ENCODE measurements at regions of chr6 and their contacts with region 1.

Region 1: GRCh38 chr6:53484476-53485280 is 60.2 kb downstream of the GCLC start:
- DNase-seq: peak; percentile 44 to 85
- H3K4me3 ChIP-seq: no peak overlapping the region
- H3K27ac ChIP-seq: no peak overlapping the region
- H3K4me1 ChIP-seq: no peaks in the 10 kb centered on the region
- H3K27me3 ChIP-seq: no peaks in the 10 kb centered on the region
- CTCF ChIP-seq: peak; percentile 89 to 96 (median 96)
- POLR2A ChIP-seq: no peak

Region 2: DNA sequence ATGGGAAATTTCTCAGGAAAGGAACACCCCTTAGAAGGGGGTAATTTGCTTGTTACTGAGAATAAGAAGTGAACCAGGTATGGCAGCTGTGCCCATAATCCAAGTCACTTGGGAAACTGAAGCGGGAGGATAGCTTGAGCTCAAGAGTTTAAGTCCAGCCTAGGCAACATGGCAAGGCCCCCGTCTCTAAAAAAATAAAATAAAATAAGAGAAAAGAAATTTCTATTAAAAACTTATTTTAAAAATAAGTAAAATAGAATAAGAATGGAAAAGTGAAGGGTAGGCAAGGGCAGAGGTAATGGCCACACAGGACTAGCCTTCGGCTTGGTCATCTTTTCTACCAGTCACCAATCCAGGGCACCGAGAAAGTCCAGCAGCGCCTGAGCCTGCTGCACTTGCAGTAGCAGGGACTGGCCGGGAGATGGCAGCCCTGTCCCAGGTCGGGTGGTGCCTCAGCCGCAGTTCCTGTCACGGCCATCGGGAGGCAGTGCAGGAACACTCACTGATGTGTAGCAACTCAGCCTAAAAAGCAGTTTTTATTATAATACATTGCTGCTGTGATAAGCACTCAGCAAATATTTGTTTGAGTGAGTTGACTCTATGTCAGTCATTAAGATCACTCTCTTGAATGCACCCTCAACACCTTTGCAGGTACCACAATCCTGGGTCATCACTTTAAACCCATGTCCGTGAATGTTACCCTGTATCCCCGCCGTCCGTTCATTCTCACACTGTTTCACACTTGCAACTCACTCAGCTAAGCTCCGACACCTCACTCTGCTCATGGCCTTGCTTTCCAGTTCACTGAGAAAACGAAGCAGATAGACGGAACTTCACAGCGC is 312.9 kb before region 1 on chr6:
- intact Hi-C with region 1: loop called (anchors 5 kb)
- DNase-seq: peak; percentile 84 to 87
- H3K4me3 ChIP-seq: no peak overlapping the region
- H3K27ac ChIP-seq: no peak overlapping the region
- H3K4me1 ChIP-seq: no peaks in the 10 kb centered on the region
- H3K27me3 ChIP-seq: no peaks in the 10 kb centered on the region
- CTCF ChIP-seq: peak; percentile 100
- POLR2A ChIP-seq: peak in 1 of 2 donors; percentile 44

Measured in uterus (tissue), 4 donors.